ENCODE measurements at regions of chr1 and their contacts with region 1.

Region 1: DNA sequence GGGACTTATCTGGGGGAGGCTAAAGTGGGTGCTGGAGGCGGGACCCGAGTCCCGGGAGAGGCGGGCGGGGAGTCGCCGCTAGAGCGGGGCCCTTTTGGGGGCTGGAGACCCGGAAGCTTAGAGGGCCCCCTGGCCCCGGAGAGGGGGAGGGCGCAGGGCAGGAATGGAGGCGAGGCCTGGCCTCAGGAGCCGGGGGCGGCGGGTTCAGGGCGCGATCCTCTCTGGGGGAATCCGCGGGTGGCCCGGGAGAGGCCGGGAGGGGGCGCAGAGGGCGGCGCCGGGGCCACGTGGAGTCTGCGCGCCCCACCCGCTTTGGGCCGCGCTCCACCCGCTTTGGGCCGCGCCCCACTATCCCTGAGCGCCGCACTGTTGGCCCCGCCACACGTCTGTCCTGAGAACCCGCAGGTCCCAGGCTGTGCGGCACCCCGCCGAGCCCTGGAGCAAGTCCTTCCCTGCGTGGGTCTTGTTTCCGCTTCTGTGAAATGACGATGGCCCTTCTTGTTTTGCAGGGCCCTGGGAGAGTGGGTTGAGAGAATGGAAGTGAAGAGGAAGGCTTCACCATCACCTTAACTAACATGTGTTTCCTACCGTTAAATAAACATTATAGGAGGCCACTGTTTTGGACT is 84.4 kb downstream of the NKAIN1 start:
- DNase-seq: peak; percentile 64
- H3K4me3 Mint-ChIP-seq: peak overlapping the region; percentile 94
- H3K27ac Mint-ChIP-seq: peak overlapping the region; percentile 86
- H3K4me1 Mint-ChIP-seq: peaks cover 5% of the 10 kb centered on the region
- H3K27me3 Mint-ChIP-seq: peaks cover 6% of the 10 kb centered on the region

Region 2: DNA sequence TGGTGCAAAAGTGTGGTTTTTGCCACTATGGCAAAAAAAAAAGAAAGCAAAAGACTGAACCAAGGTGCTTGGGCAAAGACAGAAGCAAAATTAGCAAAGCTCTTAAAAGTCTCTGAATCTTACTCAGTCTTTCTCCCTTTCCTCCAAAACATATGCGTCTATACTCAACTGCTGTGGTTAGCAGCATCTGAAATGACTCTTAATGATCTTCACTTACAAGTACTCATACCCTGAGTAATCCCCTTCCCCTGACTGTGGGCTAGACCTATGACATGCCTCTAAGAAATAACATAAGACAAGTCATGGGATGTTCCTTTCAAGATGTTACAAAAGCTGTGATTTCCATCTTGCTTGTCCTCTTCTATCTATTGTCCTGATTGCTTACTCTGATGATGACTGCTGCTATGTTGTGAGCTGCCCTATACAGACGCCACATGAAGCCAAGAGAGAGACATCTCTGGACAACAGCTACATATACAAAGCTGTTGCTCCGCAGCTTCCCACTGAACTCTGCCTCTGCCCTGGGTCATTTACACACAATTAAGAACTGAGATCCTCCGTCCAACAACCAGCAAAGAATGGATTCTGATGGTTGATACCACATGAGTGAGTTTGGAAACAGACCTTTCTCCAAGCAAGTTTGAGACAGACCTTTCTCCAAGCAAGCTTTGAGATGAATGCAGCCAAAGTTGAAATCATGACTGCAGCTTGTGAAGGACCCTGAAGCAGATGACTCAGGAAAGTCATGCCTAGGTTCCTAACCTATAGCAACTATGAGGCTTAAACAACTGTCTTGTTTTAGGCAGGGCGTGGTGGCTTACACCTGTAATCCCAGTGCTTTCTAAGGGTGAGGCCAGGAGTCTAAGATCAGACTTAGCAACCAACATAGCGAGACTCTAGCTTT is 145.0 kb before region 1 on chr1:
- intact Hi-C with region 1: loop called (anchors 10 kb)
- DNase-seq: peak; percentile 9
- H3K4me3 Mint-ChIP-seq: no peak overlapping the region
- H3K27ac Mint-ChIP-seq: peak overlapping the region; percentile 86
- H3K4me1 Mint-ChIP-seq: peaks cover 58% of the 10 kb centered on the region
- H3K27me3 Mint-ChIP-seq: no peaks in the 10 kb centered on the region

Region 3: GRCh38 chr1:31065310-31066217 is 89.8 kb before region 1 on chr1 and contains the start of gene PUM1:
- intact Hi-C with region 1: loop called (anchors 1 kb)
- DNase-seq: peak; percentile 97
- H3K4me3 Mint-ChIP-seq: peak within 1 kb of the TSS; percentile 99
- H3K27ac Mint-ChIP-seq: peak within 1 kb of the TSS; percentile 98
- H3K4me1 Mint-ChIP-seq: peaks cover 35% of the 10 kb centered on the region
- H3K27me3 Mint-ChIP-seq: no peaks in the 10 kb centered on the region
- total RNA-seq, gene PUM1: 130 and 132 TPM in 2 replicates

Region 4: DNA sequence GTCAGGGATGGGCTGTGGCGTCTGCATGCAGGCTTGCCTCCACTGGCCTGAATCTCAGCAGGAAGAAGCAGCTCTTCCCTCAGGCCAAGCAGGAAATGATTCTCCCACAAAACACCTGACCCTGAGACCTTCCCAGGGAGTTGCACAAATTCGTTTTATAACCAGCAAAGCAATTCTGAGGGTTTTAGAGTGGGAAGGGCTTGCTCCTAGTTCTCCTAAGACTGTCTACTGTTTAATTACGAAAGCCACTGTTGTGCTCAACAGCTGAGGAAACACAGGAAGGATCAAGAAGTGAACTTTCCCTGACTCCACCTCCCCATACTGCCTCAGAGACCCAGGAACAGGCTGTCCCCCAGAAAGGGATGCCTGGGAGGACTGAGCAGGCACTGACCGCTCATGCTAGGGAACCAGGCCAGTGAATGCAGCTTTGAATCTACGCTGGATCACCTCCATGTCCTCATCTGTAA is 52.8 kb before region 1 on chr1:
- intact Hi-C with region 1: no loop called
- DNase-seq: no peak
- H3K4me3 Mint-ChIP-seq: no peak overlapping the region
- H3K27ac Mint-ChIP-seq: no peak overlapping the region
- H3K4me1 Mint-ChIP-seq: no peaks in the 10 kb centered on the region
- H3K27me3 Mint-ChIP-seq: peaks cover 3% of the 10 kb centered on the region

Measured in activated T-helper 1 cell treated with anti-CD3 and anti-CD28 coated beads, Interleukin-12 subunit alpha, Interleukin-12 subunit beta, Interleukin-2, Interleukin-4 antibody, amounts not matched to agents 30 ng/mL and 10 ng/mL and 1 ng/mL, durations not matched to agents 14 hours and 24 hours and 36 hours (primary cell).